Vagina (tissue), 2 donors: ENCODE measurements at regions of chr3 and their contacts with region 1.

Region 1: DNA sequence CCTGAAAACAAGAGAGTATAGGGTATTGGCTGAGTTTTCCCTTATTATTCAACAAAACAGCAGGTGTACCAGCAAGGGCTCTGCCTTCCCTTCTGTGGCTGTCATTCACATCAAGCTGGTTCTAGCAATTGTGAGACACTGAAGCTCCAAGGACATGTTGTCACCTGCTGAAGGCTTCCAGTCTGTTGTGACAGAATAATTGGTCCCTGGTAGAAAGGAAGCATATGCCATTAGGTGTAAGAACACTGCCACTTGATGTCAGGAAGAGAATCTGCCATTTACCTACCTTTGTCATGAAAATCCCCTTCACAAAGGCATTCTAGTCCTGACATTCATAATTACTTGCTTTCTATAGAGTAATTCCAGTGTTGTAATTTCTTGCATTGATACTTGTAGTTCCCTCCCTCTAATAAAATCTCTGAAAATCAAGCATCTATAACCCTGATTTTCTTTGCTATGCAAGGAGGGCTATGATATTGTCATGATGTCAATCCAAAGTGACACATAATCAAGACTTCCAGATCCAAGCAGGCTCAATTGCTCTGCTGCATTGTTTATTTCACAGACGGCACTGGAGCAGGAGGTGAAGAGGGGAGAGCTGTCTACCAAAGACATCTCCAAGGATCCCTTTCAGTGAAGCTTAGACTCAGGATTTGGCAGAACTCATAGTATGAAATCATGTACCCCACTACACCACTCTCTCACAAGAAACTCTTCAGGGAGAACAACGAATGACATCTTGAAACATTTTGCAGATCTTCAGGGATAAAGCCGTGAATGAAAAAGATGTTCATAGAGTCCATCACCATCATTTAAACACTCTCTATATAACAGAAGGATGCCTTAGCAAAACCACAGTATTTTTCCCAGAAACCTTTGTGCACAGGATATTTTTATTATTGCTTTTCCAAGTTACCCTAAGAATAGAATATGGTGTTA is 425.3 kb downstream of the RBMS3 start:
- DNase-seq: no peak
- H3K4me3 ChIP-seq: no peak overlapping the region
- H3K27ac ChIP-seq: no peak overlapping the region
- H3K4me1 ChIP-seq: peaks cover 9% of the 10 kb centered on the region
- H3K27me3 ChIP-seq: no peaks in the 10 kb centered on the region
- CTCF ChIP-seq: no peak
- POLR2A ChIP-seq: no peak

Region 2: DNA sequence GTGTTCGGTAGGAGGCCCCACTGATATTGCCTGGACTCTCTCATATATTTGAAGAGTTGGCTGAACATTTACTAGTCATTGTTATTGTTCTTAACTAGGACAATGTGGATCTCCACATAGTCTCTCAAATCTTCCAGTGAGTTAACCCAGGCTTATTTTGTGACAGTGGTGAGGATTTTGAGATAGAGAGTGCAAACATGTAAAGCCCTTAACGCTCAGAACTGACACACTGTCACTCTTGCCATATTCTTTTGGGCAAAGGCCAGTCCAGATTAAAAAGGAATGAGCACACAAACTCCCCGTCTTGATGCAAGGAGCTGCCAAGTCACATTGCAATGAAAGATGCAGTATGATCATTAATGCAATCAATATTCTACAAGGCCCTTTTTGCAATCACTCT is 925.7 kb before region 1 on chr3:
- intact Hi-C with region 1: no loop called
- DNase-seq: no peak
- H3K4me3 ChIP-seq: no peak overlapping the region
- H3K27ac ChIP-seq: no peak overlapping the region
- H3K4me1 ChIP-seq: no peaks in the 10 kb centered on the region
- H3K27me3 ChIP-seq: no peaks in the 10 kb centered on the region
- CTCF ChIP-seq: no peak
- POLR2A ChIP-seq: no peak

Region 3: DNA sequence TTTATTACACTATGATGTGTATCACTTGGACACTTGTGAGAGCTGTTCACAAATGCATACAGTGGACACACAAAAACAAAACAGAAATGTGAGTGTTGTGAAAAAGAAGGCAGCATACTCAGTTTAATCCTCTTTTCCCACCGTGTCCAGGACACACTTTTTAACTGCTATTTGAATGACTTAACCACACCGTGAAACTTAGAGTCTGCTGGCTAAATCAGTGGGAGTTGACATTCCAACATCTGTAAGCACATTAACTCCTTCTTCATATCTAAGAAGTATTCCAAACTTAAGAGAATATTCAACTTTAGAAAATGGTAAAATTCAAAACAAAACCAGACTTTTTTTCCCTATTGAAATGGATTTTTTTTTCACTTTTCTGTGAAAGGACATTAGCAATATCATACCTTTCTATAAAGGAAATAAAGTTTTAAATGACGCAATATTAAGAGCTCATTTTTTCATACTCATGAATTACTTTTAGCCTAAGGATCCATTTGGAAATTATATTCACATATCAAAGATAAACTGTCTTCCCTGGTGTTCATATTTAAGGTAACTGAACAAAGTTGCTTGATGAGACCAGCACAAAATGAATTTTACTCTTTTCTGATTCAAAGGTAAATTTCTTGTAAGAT is 108.7 kb before region 1 on chr3:
- intact Hi-C with region 1: no loop called
- DNase-seq: no peak
- H3K4me3 ChIP-seq: no peak overlapping the region
- H3K27ac ChIP-seq: no peak overlapping the region
- H3K4me1 ChIP-seq: no peaks in the 10 kb centered on the region
- H3K27me3 ChIP-seq: no peaks in the 10 kb centered on the region
- CTCF ChIP-seq: no peak
- POLR2A ChIP-seq: no peak

Region 4: GRCh38 chr3:29759411-29760225 is 53.4 kb after region 1 on chr3:
- intact Hi-C with region 1: loop called (anchors 10 kb)
- DNase-seq: no peak
- H3K4me3 ChIP-seq: no peak overlapping the region
- H3K27ac ChIP-seq: peak overlapping the region; percentile 65
- H3K4me1 ChIP-seq: peaks cover 33% of the 10 kb centered on the region
- H3K27me3 ChIP-seq: no peaks in the 10 kb centered on the region
- CTCF ChIP-seq: no peak
- POLR2A ChIP-seq: no peak